MCF 10A (cell line): ENCODE measurements at regions of chr2 and their contacts with region 1.

Region 1: GRCh38 chr2:120174963-120175581 is 48.1 kb downstream of the TMEM185B start:
- DNase-seq: peak; percentile 71
- H3K4me3 Mint-ChIP-seq: no peak overlapping the region
- H3K27ac Mint-ChIP-seq: no peak overlapping the region
- H3K4me1 Mint-ChIP-seq: peaks cover 7% of the 10 kb centered on the region
- H3K27me3 Mint-ChIP-seq: no peaks in the 10 kb centered on the region
- CTCF ChIP-seq: peak; percentile 69

Region 2: GRCh38 chr2:119641562-119642258 is 533.4 kb before region 1 on chr2:
- CTCF ChIA-PET with region 1: interaction called, 29 read pairs
- POLR2A ChIA-PET with region 1: no interaction called
- intact Hi-C with region 1: loop called (anchors 1 kb)
- DNase-seq: peak; percentile 88
- H3K4me3 Mint-ChIP-seq: no peak overlapping the region
- H3K27ac Mint-ChIP-seq: no peak overlapping the region
- H3K4me1 Mint-ChIP-seq: peaks cover 7% of the 10 kb centered on the region
- H3K27me3 Mint-ChIP-seq: no peaks in the 10 kb centered on the region
- CTCF ChIP-seq: peak; percentile 91

Region 3: DNA sequence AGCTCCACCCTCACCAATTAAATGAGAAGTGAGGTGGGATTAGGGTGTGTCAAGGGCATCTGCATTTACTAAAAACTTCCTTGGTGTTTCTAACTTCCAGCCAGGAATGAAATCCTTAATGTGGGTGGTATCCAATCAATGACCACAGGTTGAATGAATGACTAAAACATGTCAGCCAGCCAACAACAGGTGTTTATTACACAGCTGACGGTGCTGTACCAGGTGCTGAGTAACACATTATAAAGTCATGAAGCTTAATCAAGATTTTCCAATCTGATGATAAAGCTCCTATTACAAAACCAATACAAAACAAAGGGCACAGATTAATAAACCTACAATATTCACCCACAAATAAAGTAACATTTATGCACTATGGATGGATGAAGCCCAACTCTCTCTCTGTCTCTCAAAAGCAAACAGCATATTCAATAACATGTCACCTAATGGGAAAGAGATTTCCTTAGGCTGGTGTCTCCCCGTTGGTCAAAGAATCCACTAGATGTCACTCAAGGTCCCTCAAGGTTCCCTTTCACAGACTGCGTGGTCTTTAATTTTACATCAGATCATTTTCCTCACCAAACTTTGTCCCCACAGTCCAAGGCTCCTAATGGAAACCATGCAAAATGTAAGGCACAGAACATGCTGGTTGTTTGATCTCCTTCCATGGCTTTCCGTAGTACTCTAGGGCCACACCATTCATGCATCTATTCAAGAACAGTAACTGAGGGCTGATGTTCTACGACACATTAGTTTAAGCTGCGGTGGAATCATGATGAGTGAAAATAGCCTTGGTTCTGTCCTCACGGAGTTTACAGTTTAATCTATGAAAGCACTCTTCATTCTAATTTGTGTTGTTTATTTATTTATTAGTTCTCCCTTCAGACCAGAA is 421.8 kb before region 1 on chr2:
- CTCF ChIA-PET with region 1: interaction called, 15 read pairs
- POLR2A ChIA-PET with region 1: interaction called, 5 read pairs
- intact Hi-C with region 1: loop called (anchors 2 kb)
- DNase-seq: peak; percentile 61
- H3K4me3 Mint-ChIP-seq: no peak overlapping the region
- H3K27ac Mint-ChIP-seq: no peak overlapping the region
- H3K4me1 Mint-ChIP-seq: peaks cover 56% of the 10 kb centered on the region
- H3K27me3 Mint-ChIP-seq: no peaks in the 10 kb centered on the region
- CTCF ChIP-seq: peak; percentile 47

Region 4: GRCh38 chr2:119826370-119826961 is 348.6 kb before region 1 on chr2:
- CTCF ChIA-PET with region 1: interaction called, 6 read pairs
- POLR2A ChIA-PET with region 1: interaction called, 5 read pairs
- intact Hi-C with region 1: loop called (anchors 1 kb)
- DNase-seq: peak; percentile 51
- H3K4me3 Mint-ChIP-seq: no peak overlapping the region
- H3K27ac Mint-ChIP-seq: no peak overlapping the region
- H3K4me1 Mint-ChIP-seq: peaks cover 18% of the 10 kb centered on the region
- H3K27me3 Mint-ChIP-seq: no peaks in the 10 kb centered on the region
- CTCF ChIP-seq: peak; percentile 50

Region 5: GRCh38 chr2:120109186-120110061 is 65.6 kb before region 1 on chr2:
- CTCF ChIA-PET with region 1: interaction called, 123 read pairs
- POLR2A ChIA-PET with region 1: interaction called, 52 read pairs
- intact Hi-C with region 1: loop called (anchors 1 kb)
- DNase-seq: peak; percentile 65
- H3K4me3 Mint-ChIP-seq: peak overlapping the region; percentile 34
- H3K27ac Mint-ChIP-seq: peak overlapping the region; percentile 28
- H3K4me1 Mint-ChIP-seq: peaks cover 44% of the 10 kb centered on the region
- H3K27me3 Mint-ChIP-seq: no peaks in the 10 kb centered on the region
- CTCF ChIP-seq: peak; percentile 64

Region 6: GRCh38 chr2:120272763-120273481 is 97.8 kb after region 1 on chr2:
- CTCF ChIA-PET with region 1: no interaction called
- POLR2A ChIA-PET with region 1: no interaction called
- intact Hi-C with region 1: no loop called
- DNase-seq: no peak
- H3K4me3 Mint-ChIP-seq: no peak overlapping the region
- H3K27ac Mint-ChIP-seq: no peak overlapping the region
- H3K4me1 Mint-ChIP-seq: no peaks in the 10 kb centered on the region
- H3K27me3 Mint-ChIP-seq: no peaks in the 10 kb centered on the region
- CTCF ChIP-seq: no peak

Region 7: DNA sequence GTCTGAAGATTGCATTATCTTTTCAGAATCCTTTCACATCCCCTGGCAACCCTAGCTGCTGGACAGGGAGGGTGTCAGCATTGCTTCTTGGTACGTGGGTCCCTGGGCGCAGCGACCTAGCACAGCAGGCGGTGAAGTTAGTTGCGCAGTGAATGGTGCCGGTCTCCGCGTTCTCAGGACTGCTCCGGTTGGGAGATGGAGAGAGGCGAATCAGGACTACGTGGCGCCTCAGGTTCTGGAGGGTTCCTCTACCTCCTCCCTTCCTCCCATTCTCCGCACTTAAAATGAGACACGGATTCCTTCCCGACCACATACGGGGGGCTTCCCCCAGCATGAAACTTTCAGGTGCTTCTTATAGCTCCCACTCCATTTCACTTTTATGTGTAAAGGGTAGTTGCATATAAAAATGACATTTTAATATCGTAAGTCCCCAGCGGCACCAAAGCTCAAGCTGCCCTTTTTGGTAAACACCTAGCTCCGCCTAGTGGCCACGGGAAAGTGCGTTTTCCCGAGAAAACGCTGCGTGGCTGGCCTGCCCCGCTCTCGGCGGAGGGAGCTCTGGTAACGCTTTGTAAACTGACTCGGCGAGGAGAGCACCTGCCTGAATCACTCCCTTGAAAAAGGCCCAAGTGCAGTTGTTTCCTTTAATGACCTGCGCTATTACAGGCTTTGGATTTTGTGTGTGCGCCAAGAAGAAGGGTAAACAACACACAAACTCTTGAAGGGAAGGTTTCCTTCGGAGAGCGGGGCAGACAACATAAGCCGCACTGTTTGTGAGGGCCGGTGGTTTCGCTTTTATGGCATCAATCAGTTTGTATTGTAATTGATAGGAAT is 138.0 kb after region 1 on chr2:
- CTCF ChIA-PET with region 1: interaction called, 14 read pairs
- POLR2A ChIA-PET with region 1: no interaction called
- intact Hi-C with region 1: loop called (anchors 2 kb)
- DNase-seq: peak; percentile 78
- H3K4me3 Mint-ChIP-seq: peak overlapping the region; percentile 11
- H3K27ac Mint-ChIP-seq: no peak overlapping the region
- H3K4me1 Mint-ChIP-seq: no peaks in the 10 kb centered on the region
- H3K27me3 Mint-ChIP-seq: no peaks in the 10 kb centered on the region
- CTCF ChIP-seq: peak; percentile 87